Natural killer cell (primary cell): ENCODE measurements at regions of chr3 and their contacts with region 1.

Region 1: GRCh38 chr3:30611613-30612436 is 5.4 kb downstream of the TGFBR2 start:
- DNase-seq: peak in 1 of 2 donors; percentile 63
- ATAC-seq: peak; percentile 36 to 63 (median 63)
- H3K4me3 ChIP-seq: peak overlapping the region; percentile 2
- H3K4me3 Mint-ChIP-seq: peak overlapping the region; percentile 97
- H3K27ac ChIP-seq: peak overlapping the region; percentile 81
- H3K27ac Mint-ChIP-seq: peak overlapping the region; percentile 91 to 92
- H3K4me1 ChIP-seq: peaks cover 46% of the 10 kb centered on the region
- H3K4me1 Mint-ChIP-seq: peaks cover 83 to 85% of the 10 kb centered on the region in 2 donors
- H3K27me3 ChIP-seq: no peaks in the 10 kb centered on the region
- H3K27me3 Mint-ChIP-seq: no peaks in the 10 kb centered on the region
- CTCF ChIP-seq: no peak

Region 2: DNA sequence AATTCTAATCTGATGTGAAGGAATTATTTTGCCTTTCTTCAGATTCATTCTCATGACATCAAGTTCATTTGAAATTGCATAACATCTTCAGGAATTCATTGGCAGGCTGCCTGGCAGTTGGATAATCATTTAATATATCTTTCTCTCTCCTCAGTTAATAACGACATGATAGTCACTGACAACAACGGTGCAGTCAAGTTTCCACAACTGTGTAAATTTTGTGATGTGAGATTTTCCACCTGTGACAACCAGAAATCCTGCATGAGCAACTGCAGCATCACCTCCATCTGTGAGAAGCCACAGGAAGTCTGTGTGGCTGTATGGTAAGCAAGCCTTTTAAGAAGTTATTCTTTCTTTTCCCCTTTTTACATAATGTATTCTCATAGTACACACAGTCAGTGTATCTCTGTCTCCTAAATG is 32.8 kb after region 1 on chr3:
- intact Hi-C with region 1: loop called (anchors 2 kb)
- DNase-seq: peak; percentile 47 to 81
- ATAC-seq: peak; percentile 51 to 66 (median 63)
- H3K4me3 ChIP-seq: no peak overlapping the region
- H3K4me3 Mint-ChIP-seq: peak overlapping the region; percentile 62
- H3K27ac ChIP-seq: peak overlapping the region; percentile 94
- H3K27ac Mint-ChIP-seq: peak overlapping the region; percentile 75 to 84
- H3K4me1 ChIP-seq: peaks cover 67% of the 10 kb centered on the region
- H3K4me1 Mint-ChIP-seq: peaks cover 81 to 96% of the 10 kb centered on the region in 2 donors
- H3K27me3 ChIP-seq: no peaks in the 10 kb centered on the region
- H3K27me3 Mint-ChIP-seq: no peaks in the 10 kb centered on the region
- CTCF ChIP-seq: no peak

Region 3: GRCh38 chr3:30658328-30659052 is 46.7 kb after region 1 on chr3:
- intact Hi-C with region 1: loop called (anchors 1 kb)
- DNase-seq: peak in 1 of 2 donors; percentile 81
- ATAC-seq: peak; percentile 54 to 75 (median 73)
- H3K4me3 ChIP-seq: no peak overlapping the region
- H3K4me3 Mint-ChIP-seq: peak overlapping the region; percentile 60
- H3K27ac ChIP-seq: peak overlapping the region; percentile 59
- H3K27ac Mint-ChIP-seq: peak overlapping the region; percentile 82 to 84
- H3K4me1 ChIP-seq: peaks cover 60% of the 10 kb centered on the region
- H3K4me1 Mint-ChIP-seq: peaks cover 69 to 86% of the 10 kb centered on the region in 2 donors
- H3K27me3 ChIP-seq: no peaks in the 10 kb centered on the region
- H3K27me3 Mint-ChIP-seq: no peaks in the 10 kb centered on the region
- CTCF ChIP-seq: no peak

Region 4: GRCh38 chr3:30672959-30673358 is 61.1 kb after region 1 on chr3:
- intact Hi-C with region 1: no loop called
- DNase-seq: no peak
- ATAC-seq: no peak
- H3K4me3 ChIP-seq: no peak overlapping the region
- H3K4me3 Mint-ChIP-seq: no peak overlapping the region
- H3K27ac ChIP-seq: no peak overlapping the region
- H3K27ac Mint-ChIP-seq: peak overlapping the region; percentile 63 to 84
- H3K4me1 ChIP-seq: no peaks in the 10 kb centered on the region
- H3K4me1 Mint-ChIP-seq: peaks cover 80 to 90% of the 10 kb centered on the region in 2 donors
- H3K27me3 ChIP-seq: no peaks in the 10 kb centered on the region
- H3K27me3 Mint-ChIP-seq: no peaks in the 10 kb centered on the region
- CTCF ChIP-seq: no peak